ENCODE measurements at regions of chr6 and their contacts with region 1.

Region 1: GRCh38 chr6:111220383-111221031 is 133.2 kb downstream of the SLC16A10 start:
- DNase-seq: no peak
- H3K4me3 ChIP-seq: no peak overlapping the region
- CTCF ChIP-seq: no peak

Region 2: DNA sequence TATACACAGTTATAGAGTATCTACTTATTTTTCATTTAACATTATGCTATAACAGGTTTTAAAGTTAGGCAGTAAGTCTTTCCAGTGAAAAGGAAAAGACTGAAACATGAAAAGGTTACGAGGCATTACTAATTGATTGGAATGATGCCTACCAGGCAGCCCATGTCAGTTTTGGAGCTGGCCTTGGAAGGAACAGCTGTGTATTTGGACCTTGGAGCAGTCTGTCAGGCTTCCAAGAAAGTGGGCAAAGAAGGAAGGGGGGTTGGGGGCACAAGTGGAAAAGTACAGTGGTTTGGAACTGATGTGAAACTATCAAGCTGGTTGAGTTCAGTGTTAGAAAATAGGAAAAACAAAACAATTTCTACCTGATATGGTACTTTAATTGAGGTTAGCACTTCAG is 91.5 kb before region 1 on chr6:
- CTCF ChIA-PET with region 1: no interaction called
- POLR2A ChIA-PET with region 1: no interaction called
- DNase-seq: no peak
- H3K4me3 ChIP-seq: no peak overlapping the region
- CTCF ChIP-seq: no peak

Region 3: GRCh38 chr6:111210194-111210728 is 10.2 kb before region 1 on chr6:
- CTCF ChIA-PET with region 1: interaction called, 29 read pairs
- POLR2A ChIA-PET with region 1: no interaction called
- DNase-seq: no peak
- H3K4me3 ChIP-seq: no peak overlapping the region
- CTCF ChIP-seq: peak; percentile 56

Region 4: GRCh38 chr6:111552241-111552744 is 331.8 kb after region 1 on chr6:
- CTCF ChIA-PET with region 1: no interaction called
- POLR2A ChIA-PET with region 1: no interaction called
- DNase-seq: peak; percentile 92
- H3K4me3 ChIP-seq: no peak overlapping the region
- CTCF ChIP-seq: no peak

Measured in AG04449 (cell line).